BJ (cell line): ENCODE measurements at regions of chr14 and their contacts with region 1.

Region 1: GRCh38 chr14:64503478-64504309 is at the start of gene ZBTB25:
- DNase-seq: peak; percentile 71
- H3K4me3 ChIP-seq: peak within 1 kb of the TSS; percentile 83
- H3K27me3 ChIP-seq: no peaks in the 10 kb centered on the region
- CTCF ChIP-seq: no peak
- polyA plus RNA-seq, gene ZBTB25: 5.8 and 6.1 TPM in 2 replicates

Region 2: DNA sequence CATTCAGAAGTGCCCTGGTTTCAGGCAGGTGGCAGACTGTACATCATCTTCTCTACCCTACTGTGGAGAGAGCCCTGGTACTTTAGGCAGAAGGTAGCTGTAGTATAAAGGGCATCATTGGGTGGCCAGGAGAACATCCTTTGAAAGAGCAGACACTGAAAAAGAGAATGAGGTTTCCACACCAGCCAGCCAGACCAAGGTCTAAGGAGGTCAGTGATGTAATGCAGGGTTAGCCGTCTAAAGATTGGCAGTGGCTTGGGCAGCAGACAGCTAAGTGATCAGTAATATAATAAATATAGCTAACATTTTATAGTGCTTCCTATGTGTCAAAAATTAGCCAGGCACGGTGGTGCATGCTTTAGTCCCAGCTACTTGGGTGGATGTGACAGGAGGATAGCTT is 12.1 kb before region 1 on chr14:
- CTCF ChIA-PET with region 1: interaction called, 4 read pairs
- POLR2A ChIA-PET with region 1: interaction called, 18 read pairs
- DNase-seq: no peak
- H3K4me3 ChIP-seq: no peak overlapping the region
- H3K27me3 ChIP-seq: no peaks in the 10 kb centered on the region
- CTCF ChIP-seq: no peak

Region 3: DNA sequence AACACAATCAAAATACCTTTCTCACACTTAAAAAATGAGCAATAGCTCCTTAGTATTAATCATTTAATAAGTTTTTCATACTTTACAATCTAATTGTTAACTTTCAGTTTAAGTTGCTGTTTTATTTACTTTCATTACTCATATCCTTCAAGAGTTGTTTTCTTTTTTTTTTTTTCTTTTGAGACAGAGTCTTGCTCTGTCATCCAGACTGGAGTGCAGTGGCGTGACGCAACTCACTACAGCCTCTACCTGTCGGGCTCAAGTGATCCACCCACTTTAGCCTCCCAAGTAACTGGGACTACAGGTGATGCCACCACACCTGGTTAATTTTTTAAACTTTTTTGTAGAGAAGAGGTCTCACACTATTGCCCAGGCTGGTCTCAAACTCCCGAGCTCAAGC is 17.0 kb after region 1 on chr14:
- CTCF ChIA-PET with region 1: no interaction called
- POLR2A ChIA-PET with region 1: interaction called, 20 read pairs
- DNase-seq: no peak
- H3K4me3 ChIP-seq: no peak overlapping the region
- H3K27me3 ChIP-seq: no peaks in the 10 kb centered on the region
- CTCF ChIP-seq: no peak

Region 4: GRCh38 chr14:64569184-64569631 is 65.5 kb after region 1 on chr14:
- CTCF ChIA-PET with region 1: no interaction called
- POLR2A ChIA-PET with region 1: interaction called, 22 read pairs
- DNase-seq: peak; percentile 59
- H3K4me3 ChIP-seq: no peak overlapping the region
- H3K27me3 ChIP-seq: no peaks in the 10 kb centered on the region
- CTCF ChIP-seq: no peak

Region 5: DNA sequence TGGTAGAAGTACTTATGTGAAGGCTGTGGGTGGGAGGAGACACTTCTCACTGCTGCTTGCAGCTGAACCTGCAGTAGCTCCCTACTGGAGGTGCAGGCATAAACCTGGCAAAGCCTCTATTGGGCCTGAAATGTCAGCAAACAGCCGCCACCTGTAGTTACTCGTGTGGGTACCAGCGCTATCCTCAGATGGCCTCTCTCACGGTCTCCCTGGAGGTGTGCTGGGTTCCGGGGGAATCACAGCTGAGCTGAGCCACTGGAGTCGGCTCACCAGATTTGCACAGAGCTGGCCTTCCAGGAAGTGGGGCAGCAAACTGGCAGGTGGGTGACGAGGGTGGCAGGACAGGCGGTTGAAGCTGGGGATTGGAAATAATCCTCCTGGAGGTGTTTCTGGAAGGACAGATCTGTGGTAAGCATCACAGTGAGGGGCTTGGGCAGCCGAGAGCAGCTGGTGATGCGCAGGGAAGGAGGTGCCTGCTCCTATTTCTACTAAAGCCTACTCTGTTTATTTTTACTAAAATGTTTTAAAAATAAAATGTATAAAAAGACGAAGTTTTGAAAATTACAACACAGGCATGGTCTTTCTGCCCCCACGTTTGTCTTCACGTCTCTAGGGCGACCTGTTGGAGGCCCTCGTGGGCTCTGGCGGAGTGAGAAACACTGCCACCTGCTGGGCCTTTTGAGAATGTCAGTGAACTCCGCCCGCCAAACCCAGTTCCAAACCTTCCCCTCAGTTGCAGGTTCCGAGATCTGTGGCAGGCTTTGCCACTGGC is 132.7 kb after region 1 on chr14:
- CTCF ChIA-PET with region 1: interaction called, 23 read pairs
- POLR2A ChIA-PET with region 1: no interaction called
- DNase-seq: no peak
- H3K4me3 ChIP-seq: no peak overlapping the region
- H3K27me3 ChIP-seq: no peaks in the 10 kb centered on the region
- CTCF ChIP-seq: peak; percentile 81